Activated CD4-positive, alpha-beta T cell treated with anti-CD3 and anti-CD28 coated beads for 36 hours (primary cell): ENCODE measurements at regions of chr3 and their contacts with region 1.

Region 1: DNA sequence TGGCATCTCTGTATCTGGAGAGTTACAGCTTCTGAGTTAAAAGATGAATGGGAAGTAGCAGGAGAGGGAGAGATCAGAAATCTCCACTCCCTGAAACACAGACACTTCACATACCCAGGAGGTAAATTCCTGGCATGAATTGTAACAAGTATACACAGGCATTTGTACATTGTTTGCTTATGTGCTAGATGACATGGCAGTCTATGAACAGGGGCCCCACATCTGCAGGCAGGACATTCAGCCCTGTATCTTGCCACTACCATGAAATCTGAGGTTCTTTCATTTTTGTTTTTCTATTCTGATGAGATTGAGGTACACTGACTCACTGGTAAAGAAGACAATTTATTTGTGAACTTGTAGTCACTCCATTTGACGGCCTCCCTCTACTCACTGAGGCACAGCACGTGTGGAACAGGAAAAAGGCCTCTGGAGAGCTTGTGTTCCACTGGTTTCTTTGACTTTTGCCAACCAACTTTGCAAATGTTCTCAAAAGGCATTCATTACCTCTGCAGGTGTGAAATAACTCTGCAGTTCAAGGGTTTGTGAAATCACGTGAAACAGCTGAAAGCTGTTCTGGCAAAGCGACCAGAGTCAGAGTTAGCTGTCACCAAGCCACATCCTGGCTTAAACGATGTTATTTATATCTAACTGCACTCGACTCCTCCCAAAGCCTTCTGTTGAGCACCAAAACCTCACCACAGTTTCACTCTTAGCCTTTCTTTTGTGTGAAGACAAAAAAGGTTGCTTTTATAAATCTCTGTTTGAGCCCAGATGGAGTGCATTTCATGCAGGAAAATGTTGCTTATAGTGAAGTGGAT is 401.3 kb upstream of the CFAP20DC start:
- DNase-seq: peak; percentile 72
- ATAC-seq: peak; percentile 92
- H3K4me3 Mint-ChIP-seq: peak overlapping the region; percentile 50
- H3K27ac Mint-ChIP-seq: peak overlapping the region; percentile 96
- H3K4me1 Mint-ChIP-seq: peaks cover 73% of the 10 kb centered on the region
- H3K27me3 Mint-ChIP-seq: no peaks in the 10 kb centered on the region

Region 2: DNA sequence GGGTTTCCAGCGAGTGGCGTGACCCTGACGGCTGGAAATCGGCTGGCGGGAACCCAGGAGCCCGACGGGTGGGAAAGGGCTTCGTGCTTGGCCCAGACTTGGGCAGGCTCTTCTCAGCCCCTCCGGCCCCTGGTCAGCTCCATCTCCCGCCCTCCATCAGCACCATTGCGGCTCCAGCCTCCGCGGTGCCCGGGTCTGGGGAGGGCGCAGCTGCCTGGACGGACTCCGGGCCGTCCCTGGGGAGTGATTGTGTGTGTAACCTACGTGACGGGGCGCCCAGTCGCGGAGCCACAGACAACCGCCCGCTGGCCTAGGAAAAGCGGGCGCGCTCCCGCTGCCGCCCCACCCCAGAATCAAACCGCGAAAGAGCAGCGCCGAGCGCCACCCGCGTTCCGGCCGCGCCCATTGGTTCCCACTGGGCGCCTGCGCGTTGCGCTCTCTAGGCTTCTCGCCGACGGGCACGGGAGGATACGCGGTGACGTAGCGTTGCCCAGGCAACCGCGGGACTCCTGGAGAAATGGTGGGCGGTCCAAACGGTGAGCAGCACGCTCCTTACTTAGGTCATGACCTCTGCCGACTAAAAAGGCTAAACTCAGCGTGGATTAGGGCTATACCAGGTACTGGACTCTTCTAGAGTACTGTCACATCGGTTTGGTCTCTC is 401.4 kb before region 1 on chr3 and contains the start of gene CFAP20DC:
- CTCF ChIA-PET with region 1: no interaction called
- POLR2A ChIA-PET with region 1: no interaction called
- intact Hi-C with region 1: loop called in 1 of 2 experiments (anchors 1 kb)
- DNase-seq: peak; percentile 97
- ATAC-seq: peak; percentile 99
- H3K4me3 Mint-ChIP-seq: peak within 1 kb of the TSS; percentile 66
- H3K27ac Mint-ChIP-seq: peak within 1 kb of the TSS; percentile 65
- H3K4me1 Mint-ChIP-seq: peaks cover 9% of the 10 kb centered on the region
- H3K27me3 Mint-ChIP-seq: peaks cover 2% of the 10 kb centered on the region
- total RNA-seq, gene CFAP20DC: 2.7 to 3.5 TPM

Region 3: GRCh38 chr3:59313365-59313764 is 137.8 kb before region 1 on chr3:
- CTCF ChIA-PET with region 1: no interaction called
- POLR2A ChIA-PET with region 1: no interaction called
- intact Hi-C with region 1: loop called in 1 of 2 experiments (anchors 10 kb)
- DNase-seq: peak; percentile 74
- ATAC-seq: peak; percentile 86
- H3K4me3 Mint-ChIP-seq: no peak overlapping the region
- H3K27ac Mint-ChIP-seq: no peak overlapping the region
- H3K4me1 Mint-ChIP-seq: peaks cover 17% of the 10 kb centered on the region
- H3K27me3 Mint-ChIP-seq: no peaks in the 10 kb centered on the region

Region 4: DNA sequence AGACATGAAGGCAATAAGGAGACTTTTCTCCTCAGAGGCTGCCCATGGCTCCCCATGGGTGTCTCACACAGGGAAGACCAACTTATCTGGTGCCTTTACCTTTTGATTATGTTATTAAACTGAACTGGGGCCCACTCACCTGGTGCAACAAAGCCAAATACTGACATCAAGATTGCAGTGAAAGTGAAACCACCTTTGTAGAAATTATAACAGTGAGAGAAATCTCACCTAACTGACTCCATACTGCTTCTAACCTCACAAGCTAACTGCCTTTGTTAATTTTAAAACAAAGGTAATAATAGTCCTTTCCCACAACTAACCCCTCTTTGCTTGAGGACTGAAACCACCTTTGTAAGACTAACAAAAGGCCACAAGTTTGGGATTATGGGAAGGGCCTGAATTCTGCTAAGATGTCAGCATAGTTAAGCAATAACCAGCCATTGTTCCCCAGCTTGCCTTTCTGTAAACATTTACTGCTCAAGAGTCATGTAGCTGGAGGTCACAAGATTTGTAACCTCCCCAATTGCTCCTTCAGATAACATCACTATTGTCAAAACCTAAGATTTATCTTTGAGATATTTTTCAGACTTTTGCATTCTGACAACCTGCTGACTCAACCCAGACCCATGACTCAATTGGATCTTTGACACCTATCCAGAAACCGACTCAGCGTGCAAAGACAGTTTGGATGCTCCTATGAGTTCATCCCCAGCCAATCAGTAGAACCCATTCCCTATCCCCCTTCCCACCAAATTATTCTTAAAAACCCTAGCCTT is 19.0 kb after region 1 on chr3:
- CTCF ChIA-PET with region 1: interaction called, 4 read pairs
- POLR2A ChIA-PET with region 1: no interaction called
- intact Hi-C with region 1: loop called in 1 of 2 experiments (anchors 1 kb)
- DNase-seq: peak; percentile 59
- ATAC-seq: peak; percentile 86
- H3K4me3 Mint-ChIP-seq: no peak overlapping the region
- H3K27ac Mint-ChIP-seq: peak overlapping the region; percentile 59
- H3K4me1 Mint-ChIP-seq: peaks cover 28% of the 10 kb centered on the region
- H3K27me3 Mint-ChIP-seq: peaks cover 2% of the 10 kb centered on the region

Region 5: GRCh38 chr3:59526999-59527398 is 75.8 kb after region 1 on chr3:
- CTCF ChIA-PET with region 1: no interaction called
- POLR2A ChIA-PET with region 1: no interaction called
- intact Hi-C with region 1: loop called in 1 of 2 experiments (anchors 2 kb)
- DNase-seq: no peak
- ATAC-seq: peak; percentile 98
- H3K4me3 Mint-ChIP-seq: no peak overlapping the region
- H3K27ac Mint-ChIP-seq: peak overlapping the region; percentile 55
- H3K4me1 Mint-ChIP-seq: peaks cover 18% of the 10 kb centered on the region
- H3K27me3 Mint-ChIP-seq: peaks cover 3% of the 10 kb centered on the region

Region 6: GRCh38 chr3:59857589-59858346 is 406.6 kb after region 1 on chr3:
- CTCF ChIA-PET with region 1: no interaction called
- POLR2A ChIA-PET with region 1: no interaction called
- intact Hi-C with region 1: loop called in 1 of 2 experiments (anchors 10 kb)
- DNase-seq: peak; percentile 89
- ATAC-seq: peak; percentile 97
- H3K4me3 Mint-ChIP-seq: peak overlapping the region; percentile 27
- H3K27ac Mint-ChIP-seq: peak overlapping the region; percentile 47
- H3K4me1 Mint-ChIP-seq: peaks cover 18% of the 10 kb centered on the region
- H3K27me3 Mint-ChIP-seq: no peaks in the 10 kb centered on the region